CD4-positive, alpha-beta T cell (primary cell): ENCODE measurements at regions of chr3 and their contacts with region 1.

Region 1: DNA sequence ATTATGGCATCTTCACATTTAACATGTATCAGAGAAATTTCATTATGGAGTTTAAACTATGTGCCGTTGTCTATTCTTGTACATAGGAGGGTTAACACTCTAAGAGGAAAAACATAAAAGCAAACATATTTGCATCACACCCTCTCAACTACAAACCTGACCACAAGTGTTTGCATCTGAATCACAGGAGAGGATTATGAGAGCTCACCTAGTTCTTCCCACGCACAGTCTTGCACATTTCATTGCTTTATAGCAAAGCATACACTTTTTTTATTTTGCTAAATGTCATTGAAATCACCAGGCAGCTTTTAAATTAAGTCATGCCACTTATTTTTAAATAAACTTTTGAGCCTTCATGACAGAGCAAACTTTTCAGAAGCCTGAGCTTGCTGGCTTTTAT is 12.5 kb downstream of the TRAT1 start:
- DNase-seq: peak in 5 of 14 experiments; percentile 46 to 84 (median 74)
- ATAC-seq: peak; percentile 90
- H3K4me3 ChIP-seq: peak overlapping the region; percentile 37
- H3K4me3 Mint-ChIP-seq: peak overlapping the region; percentile 83
- H3K27ac ChIP-seq: peak overlapping the region; percentile 39 to 65
- H3K27ac Mint-ChIP-seq: peak overlapping the region; percentile 85
- H3K4me1 ChIP-seq: peaks cover 31% of the 10 kb centered on the region
- H3K4me1 Mint-ChIP-seq: peaks cover 93% of the 10 kb centered on the region
- H3K27me3 ChIP-seq: no peaks in the 10 kb centered on the region
- H3K27me3 Mint-ChIP-seq: no peaks in the 10 kb centered on the region
- CTCF ChIP-seq: no peak

Region 2: DNA sequence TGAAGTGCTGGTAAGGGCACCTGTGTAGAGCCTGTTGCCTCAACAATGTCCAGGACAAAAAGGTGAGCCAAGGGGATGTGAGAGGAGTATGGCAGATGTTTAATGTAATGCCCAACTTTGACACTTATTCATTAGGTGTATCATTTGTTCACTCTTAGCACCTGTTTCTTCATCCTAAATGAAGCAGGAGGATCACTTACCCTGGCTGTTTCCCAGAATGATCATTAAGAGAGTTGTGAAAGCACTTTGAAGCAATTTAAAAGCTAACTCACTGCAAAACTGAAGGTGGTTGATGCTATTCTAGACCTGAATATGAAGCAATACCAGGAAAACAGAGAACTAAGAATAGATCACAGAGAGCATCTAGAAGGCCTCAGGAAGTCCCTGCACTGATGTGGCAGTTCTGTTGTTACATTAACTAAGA is 542.2 kb before region 1 on chr3:
- CTCF ChIA-PET with region 1: no interaction called
- POLR2A ChIA-PET with region 1: no interaction called
- intact Hi-C with region 1: no loop called
- DNase-seq: peak in 3 of 14 experiments; percentile 23 to 53 (median 28)
- ATAC-seq: peak; percentile 48
- H3K4me3 ChIP-seq: no peak overlapping the region
- H3K4me3 Mint-ChIP-seq: no peak overlapping the region
- H3K27ac ChIP-seq: peak overlapping the region; percentile 19 to 26
- H3K27ac Mint-ChIP-seq: peak overlapping the region; percentile 50
- H3K4me1 ChIP-seq: peaks cover 14% of the 10 kb centered on the region
- H3K4me1 Mint-ChIP-seq: peaks cover 32% of the 10 kb centered on the region
- H3K27me3 ChIP-seq: no peaks in the 10 kb centered on the region
- H3K27me3 Mint-ChIP-seq: no peaks in the 10 kb centered on the region
- CTCF ChIP-seq: no peak

Region 3: DNA sequence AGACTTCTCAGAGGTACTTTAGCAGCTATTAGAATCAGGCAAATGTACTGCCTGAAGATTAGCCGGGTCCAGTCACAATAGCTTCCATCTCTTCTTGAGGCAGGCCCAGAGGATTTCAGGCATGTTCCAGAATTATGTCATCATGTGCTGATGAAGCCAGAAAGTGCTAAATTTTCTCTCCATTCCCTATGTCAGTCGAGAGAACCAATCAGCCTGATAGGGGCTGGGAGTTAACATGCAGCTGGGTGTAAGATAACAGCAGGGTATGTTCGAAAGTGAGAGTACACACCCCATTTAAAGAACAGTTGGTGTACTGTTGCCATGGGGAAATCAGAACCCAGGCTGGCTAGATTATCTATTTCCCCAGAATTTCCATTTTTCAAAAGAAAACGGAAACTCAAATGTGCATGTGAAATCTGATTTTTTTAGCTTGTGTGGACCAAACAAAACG is 373.4 kb before region 1 on chr3:
- CTCF ChIA-PET with region 1: no interaction called
- POLR2A ChIA-PET with region 1: no interaction called
- intact Hi-C with region 1: no loop called
- DNase-seq: no peak
- ATAC-seq: no peak
- H3K4me3 ChIP-seq: no peak overlapping the region
- H3K4me3 Mint-ChIP-seq: no peak overlapping the region
- H3K27ac ChIP-seq: no peak overlapping the region
- H3K27ac Mint-ChIP-seq: no peak overlapping the region
- H3K4me1 ChIP-seq: no peaks in the 10 kb centered on the region
- H3K4me1 Mint-ChIP-seq: no peaks in the 10 kb centered on the region
- H3K27me3 ChIP-seq: no peaks in the 10 kb centered on the region
- H3K27me3 Mint-ChIP-seq: peaks cover 7% of the 10 kb centered on the region
- CTCF ChIP-seq: no peak

Region 4: GRCh38 chr3:108780235-108780634 is 54.9 kb before region 1 on chr3:
- CTCF ChIA-PET with region 1: no interaction called
- POLR2A ChIA-PET with region 1: interaction called, 3 read pairs
- intact Hi-C with region 1: loop called in 1 of 2 experiments (anchors 10 kb)
- DNase-seq: peak in 11 of 14 experiments; percentile 7 to 75 (median 21)
- ATAC-seq: peak; percentile 88
- H3K4me3 ChIP-seq: no peak overlapping the region
- H3K4me3 Mint-ChIP-seq: no peak overlapping the region
- H3K27ac ChIP-seq: no peak overlapping the region
- H3K27ac Mint-ChIP-seq: peak overlapping the region; percentile 43
- H3K4me1 ChIP-seq: peaks cover 10% of the 10 kb centered on the region
- H3K4me1 Mint-ChIP-seq: peaks cover 45% of the 10 kb centered on the region
- H3K27me3 ChIP-seq: no peaks in the 10 kb centered on the region
- H3K27me3 Mint-ChIP-seq: no peaks in the 10 kb centered on the region
- CTCF ChIP-seq: no peak

Region 5: DNA sequence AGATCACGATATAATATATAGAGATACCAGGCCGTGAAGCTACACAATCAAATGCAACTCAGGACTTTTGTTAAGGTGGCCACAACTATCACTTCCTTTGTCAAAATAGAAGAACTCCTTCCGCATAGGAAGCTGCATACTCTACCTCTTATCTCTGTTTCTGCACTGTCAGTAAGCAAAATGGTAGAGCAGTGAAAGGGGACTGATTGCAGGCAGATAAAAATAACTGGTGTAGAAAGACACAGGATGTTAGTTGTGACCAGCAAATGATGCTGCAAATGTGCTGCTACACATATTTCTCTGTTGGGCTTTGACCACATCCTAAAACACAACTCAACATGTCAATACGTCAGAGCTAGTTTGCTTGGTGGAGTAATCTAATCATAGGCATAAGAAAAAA is 28.8 kb before region 1 on chr3:
- CTCF ChIA-PET with region 1: no interaction called
- POLR2A ChIA-PET with region 1: interaction called, 7 read pairs
- intact Hi-C with region 1: loop called in 1 of 2 experiments (anchors 2 kb)
- DNase-seq: peak in 6 of 14 experiments; percentile 3 to 93 (median 60)
- ATAC-seq: peak; percentile 95
- H3K4me3 ChIP-seq: no peak overlapping the region
- H3K4me3 Mint-ChIP-seq: peak overlapping the region; percentile 2
- H3K27ac ChIP-seq: no peak overlapping the region
- H3K27ac Mint-ChIP-seq: peak overlapping the region; percentile 76
- H3K4me1 ChIP-seq: peaks cover 8% of the 10 kb centered on the region
- H3K4me1 Mint-ChIP-seq: peaks cover 33% of the 10 kb centered on the region
- H3K27me3 ChIP-seq: no peaks in the 10 kb centered on the region
- H3K27me3 Mint-ChIP-seq: no peaks in the 10 kb centered on the region
- CTCF ChIP-seq: no peak

Region 6: DNA sequence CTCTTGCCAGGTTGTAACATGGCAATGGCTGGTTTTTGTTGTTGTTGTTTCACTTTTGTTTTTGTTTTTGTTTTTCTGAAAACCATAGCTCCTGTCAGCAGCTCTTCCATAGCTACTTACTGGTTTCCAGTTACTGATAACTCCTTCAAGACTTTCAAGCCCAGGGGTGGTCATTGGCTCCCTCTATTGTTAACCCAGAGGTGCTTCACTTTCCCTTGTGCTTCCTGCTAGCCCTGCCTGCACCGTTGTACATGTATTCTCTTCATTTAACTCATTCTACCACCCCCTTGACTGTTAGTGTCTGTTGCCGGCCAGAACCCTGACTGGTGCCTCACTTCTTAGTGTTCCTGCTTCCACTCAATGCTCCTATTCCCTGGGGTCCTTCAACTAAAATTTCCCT is 16.7 kb before region 1 on chr3:
- CTCF ChIA-PET with region 1: interaction called, 14 read pairs
- POLR2A ChIA-PET with region 1: interaction called, 101 read pairs
- intact Hi-C with region 1: loop called in 1 of 2 experiments (anchors 2 kb)
- DNase-seq: peak; percentile 31 to 87 (median 54)
- ATAC-seq: peak; percentile 92
- H3K4me3 ChIP-seq: no peak overlapping the region
- H3K4me3 Mint-ChIP-seq: peak overlapping the region; percentile 8
- H3K27ac ChIP-seq: no peak overlapping the region
- H3K27ac Mint-ChIP-seq: peak overlapping the region; percentile 29
- H3K4me1 ChIP-seq: peaks cover 22% of the 10 kb centered on the region
- H3K4me1 Mint-ChIP-seq: peaks cover 26% of the 10 kb centered on the region
- H3K27me3 ChIP-seq: no peaks in the 10 kb centered on the region
- H3K27me3 Mint-ChIP-seq: no peaks in the 10 kb centered on the region
- CTCF ChIP-seq: peak; percentile 80

Region 7: GRCh38 chr3:108845709-108846293 is 10.7 kb after region 1 on chr3:
- CTCF ChIA-PET with region 1: no interaction called
- POLR2A ChIA-PET with region 1: interaction called, 6 read pairs
- intact Hi-C with region 1: loop called (anchors 2 kb)
- DNase-seq: no peak
- ATAC-seq: peak; percentile 24
- H3K4me3 ChIP-seq: no peak overlapping the region
- H3K4me3 Mint-ChIP-seq: peak overlapping the region; percentile 62
- H3K27ac ChIP-seq: no peak overlapping the region
- H3K27ac Mint-ChIP-seq: peak overlapping the region; percentile 82
- H3K4me1 ChIP-seq: peaks cover 34% of the 10 kb centered on the region
- H3K4me1 Mint-ChIP-seq: peaks cover 78% of the 10 kb centered on the region
- H3K27me3 ChIP-seq: no peaks in the 10 kb centered on the region
- H3K27me3 Mint-ChIP-seq: no peaks in the 10 kb centered on the region
- CTCF ChIP-seq: no peak